Common myeloid progenitor, CD34-positive (primary cell): ENCODE measurements at regions of chr3 and their contacts with region 1.

Region 1: GRCh38 chr3:105518806-105519418 is 152.2 kb downstream of the ALCAM start:
- DNase-seq: peak; percentile 67 to 85 (median 77)
- H3K4me3 ChIP-seq: no peak overlapping the region
- H3K27ac ChIP-seq: no peak overlapping the region
- H3K4me1 ChIP-seq: peaks cover 0 to 1% (median 0%) of the 10 kb centered on the region in 4 experiments
- H3K27me3 ChIP-seq: no peaks in the 10 kb centered on the region

Region 2: GRCh38 chr3:105503191-105503593 is 15.7 kb before region 1 on chr3:
- CTCF ChIA-PET with region 1: interaction called, 10 read pairs
- POLR2A ChIA-PET with region 1: no interaction called
- DNase-seq: no peak
- H3K4me3 ChIP-seq: no peak overlapping the region
- H3K27ac ChIP-seq: no peak overlapping the region
- H3K4me1 ChIP-seq: peaks cover 0 to 3% (median 0%) of the 10 kb centered on the region in 4 experiments
- H3K27me3 ChIP-seq: no peaks in the 10 kb centered on the region